Activated CD4-positive, alpha-beta T cell treated with anti-CD3 and anti-CD28 coated beads for 36 hours (primary cell): ENCODE measurements at regions of chr3 and their contacts with region 1.

Region 1: GRCh38 chr3:128804017-128804810 is 75.2 kb upstream of the ACAD9 start:
- DNase-seq: peak; percentile 78
- ATAC-seq: peak; percentile 76
- H3K4me3 Mint-ChIP-seq: peak overlapping the region; percentile 69
- H3K27ac Mint-ChIP-seq: peak overlapping the region; percentile 97
- H3K4me1 Mint-ChIP-seq: peaks cover 86% of the 10 kb centered on the region
- H3K27me3 Mint-ChIP-seq: no peaks in the 10 kb centered on the region

Region 2: GRCh38 chr3:127560051-127560787 is 1244.0 kb before region 1 on chr3:
- CTCF ChIA-PET with region 1: no interaction called
- POLR2A ChIA-PET with region 1: no interaction called
- intact Hi-C with region 1: no loop called
- DNase-seq: no peak
- ATAC-seq: no peak
- H3K4me3 Mint-ChIP-seq: no peak overlapping the region
- H3K27ac Mint-ChIP-seq: no peak overlapping the region
- H3K4me1 Mint-ChIP-seq: peaks cover 3% of the 10 kb centered on the region
- H3K27me3 Mint-ChIP-seq: no peaks in the 10 kb centered on the region

Region 3: GRCh38 chr3:128725932-128726690 is 78.1 kb before region 1 on chr3 and contains the start of gene RAB7A:
- CTCF ChIA-PET with region 1: interaction called, 6 read pairs
- POLR2A ChIA-PET with region 1: interaction called, 5 read pairs
- intact Hi-C with region 1: loop called (anchors 1 to 5 kb)
- DNase-seq: peak; percentile 99
- ATAC-seq: peak; percentile 92
- H3K4me3 Mint-ChIP-seq: peak within 1 kb of the TSS; percentile 89
- H3K27ac Mint-ChIP-seq: peak within 1 kb of the TSS; percentile 92
- H3K4me1 Mint-ChIP-seq: peaks cover 52% of the 10 kb centered on the region
- H3K27me3 Mint-ChIP-seq: no peaks in the 10 kb centered on the region
- total RNA-seq, gene RAB7A: 297 to 534 TPM

Region 4: GRCh38 chr3:128969993-128970739 is 166.0 kb after region 1 on chr3:
- CTCF ChIA-PET with region 1: no interaction called
- POLR2A ChIA-PET with region 1: no interaction called
- intact Hi-C with region 1: no loop called
- DNase-seq: peak; percentile 80
- ATAC-seq: peak; percentile 74
- H3K4me3 Mint-ChIP-seq: no peak overlapping the region
- H3K27ac Mint-ChIP-seq: no peak overlapping the region
- H3K4me1 Mint-ChIP-seq: peaks cover 3% of the 10 kb centered on the region
- H3K27me3 Mint-ChIP-seq: no peaks in the 10 kb centered on the region